Activated CD4-positive, alpha-beta T cell treated with anti-CD3 and anti-CD28 coated beads for 36 hours (primary cell): ENCODE measurements at regions of chr6 and their contacts with region 1.

Region 1: DNA sequence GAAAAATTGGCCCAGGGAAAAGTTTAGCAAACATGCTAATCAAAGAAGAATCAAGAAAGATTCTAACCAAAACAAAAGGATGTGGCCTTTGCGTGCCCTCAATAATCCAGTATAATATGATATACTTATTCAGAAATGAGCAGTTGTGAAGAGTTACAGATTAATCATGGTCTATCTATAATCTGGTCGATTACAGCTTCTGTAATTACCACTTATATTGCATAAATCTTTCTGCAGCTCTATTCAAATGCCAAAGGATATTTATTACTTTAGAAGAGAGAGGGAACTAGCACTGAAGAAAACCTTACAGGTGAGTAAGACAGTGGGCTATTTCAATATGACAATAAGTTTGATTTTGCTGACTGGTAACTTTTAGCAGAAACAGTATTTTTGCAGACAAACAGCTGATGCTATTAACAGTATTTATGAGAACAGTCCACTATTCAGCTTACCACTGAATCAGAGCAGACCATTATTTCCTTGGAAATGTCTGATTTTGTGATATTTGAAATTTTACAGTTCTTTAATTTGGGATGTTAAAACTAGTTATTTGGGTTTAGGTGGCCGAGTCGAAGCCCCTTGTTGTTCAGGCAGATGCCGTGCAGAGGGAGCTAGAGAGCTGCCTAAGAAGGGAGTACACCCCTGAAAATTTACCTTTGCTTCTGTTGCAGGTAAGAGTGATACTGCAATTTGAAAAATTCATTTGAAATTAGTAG is 92.2 kb downstream of the CEP57L1 start:
- DNase-seq: peak; percentile 75
- ATAC-seq: peak; percentile 81
- H3K4me3 Mint-ChIP-seq: no peak overlapping the region
- H3K27ac Mint-ChIP-seq: no peak overlapping the region
- H3K4me1 Mint-ChIP-seq: peaks cover 3% of the 10 kb centered on the region
- H3K27me3 Mint-ChIP-seq: peaks cover 18% of the 10 kb centered on the region

Region 2: GRCh38 chr6:109235481-109236038 is 48.0 kb after region 1 on chr6:
- CTCF ChIA-PET with region 1: interaction called, 8 read pairs
- POLR2A ChIA-PET with region 1: no interaction called
- intact Hi-C with region 1: loop called in 1 of 2 experiments (anchors 1 kb)
- DNase-seq: no peak
- ATAC-seq: no peak
- H3K4me3 Mint-ChIP-seq: no peak overlapping the region
- H3K27ac Mint-ChIP-seq: no peak overlapping the region
- H3K4me1 Mint-ChIP-seq: peaks cover 14% of the 10 kb centered on the region
- H3K27me3 Mint-ChIP-seq: peaks cover 2% of the 10 kb centered on the region

Region 3: DNA sequence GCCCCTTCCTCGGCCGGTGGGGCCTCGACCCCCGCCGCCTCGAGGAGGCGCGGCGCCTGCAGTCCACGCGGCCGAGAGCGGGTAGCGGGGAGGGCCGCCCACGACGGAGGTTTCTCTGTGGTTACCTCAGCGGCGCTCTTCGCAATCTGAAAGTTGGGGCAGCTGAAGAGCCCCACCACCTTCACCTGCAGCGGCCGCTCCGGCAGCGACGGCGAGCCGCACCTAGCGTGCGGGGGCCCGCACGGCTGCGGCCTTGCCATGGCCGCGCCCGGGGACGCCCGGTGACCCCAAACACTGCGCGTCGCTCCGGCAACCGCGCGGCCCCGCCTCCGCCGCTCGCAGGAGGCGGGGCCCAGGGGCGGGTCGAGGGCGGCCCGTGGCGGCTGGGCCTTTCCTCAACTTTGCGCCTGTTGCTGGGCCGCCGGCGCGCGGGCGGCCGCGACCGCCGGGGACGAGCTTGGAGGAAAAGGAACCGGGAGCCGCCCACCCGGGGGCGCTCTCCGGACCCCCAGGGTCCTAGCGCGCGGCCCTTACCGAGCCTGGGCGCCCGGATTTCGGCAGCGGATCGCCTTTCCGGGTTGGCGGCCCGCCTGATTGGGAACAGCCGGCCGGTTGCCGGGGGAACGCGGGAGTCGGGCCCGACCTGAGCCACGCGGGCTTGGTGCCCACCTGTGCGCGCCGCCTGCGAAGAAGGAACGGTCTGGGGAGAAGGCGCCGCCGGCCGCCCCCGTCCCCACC is 252.9 kb after region 1 on chr6 and contains the starts of genes PPIL6 and SMPD2:
- CTCF ChIA-PET with region 1: interaction called, 9 read pairs
- POLR2A ChIA-PET with region 1: no interaction called
- intact Hi-C with region 1: loop called (anchors 5 kb)
- DNase-seq: peak; percentile 86
- ATAC-seq: peak; percentile 85
- H3K4me3 Mint-ChIP-seq: peak within 1 kb of the TSS; percentile 89
- H3K27ac Mint-ChIP-seq: peak within 1 kb of the TSS; percentile 85
- H3K4me1 Mint-ChIP-seq: peaks cover 18% of the 10 kb centered on the region
- H3K27me3 Mint-ChIP-seq: no peaks in the 10 kb centered on the region
- total RNA-seq, gene PPIL6: 0.09 TPM in 1 of 2 experiments, not detected in the other
- total RNA-seq, gene SMPD2: 7.5 to 9.5 TPM

Region 4: DNA sequence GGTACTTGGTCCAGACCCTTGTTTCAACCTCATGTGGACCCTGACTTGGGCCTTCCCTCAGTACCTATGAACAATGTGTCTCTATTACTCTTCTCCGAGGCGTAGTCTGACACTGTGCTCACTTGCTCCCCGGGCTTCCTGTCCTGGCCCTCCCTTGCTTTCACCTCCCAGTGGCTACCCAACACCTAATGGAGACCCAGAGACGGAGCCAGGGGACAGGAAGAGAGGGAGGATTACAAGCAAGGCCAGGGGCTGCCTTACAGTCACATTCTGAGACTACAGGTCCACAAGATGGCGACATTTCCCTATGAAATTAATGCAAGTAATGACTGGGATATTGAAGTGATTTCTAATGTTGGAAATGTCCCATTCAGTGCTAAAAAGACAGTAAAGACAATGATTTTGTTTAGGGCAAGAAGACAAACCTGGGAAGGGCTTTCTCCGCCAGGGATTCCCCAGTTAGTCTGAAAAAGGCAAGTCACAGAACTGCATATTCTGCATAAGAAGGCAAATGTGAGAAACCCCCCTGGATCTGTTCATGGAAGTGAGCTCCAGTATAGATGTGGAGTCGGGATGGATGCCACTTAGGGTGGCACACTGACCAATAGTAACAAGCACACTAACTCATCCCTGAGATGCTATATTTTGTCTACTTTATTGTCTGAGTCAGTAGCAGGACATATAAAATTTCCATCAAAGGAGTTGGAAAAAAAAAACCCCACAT is 339.5 kb after region 1 on chr6:
- CTCF ChIA-PET with region 1: no interaction called
- POLR2A ChIA-PET with region 1: no interaction called
- intact Hi-C with region 1: loop called in 1 of 2 experiments (anchors 5 kb)
- DNase-seq: peak; percentile 66
- ATAC-seq: peak; percentile 84
- H3K4me3 Mint-ChIP-seq: no peak overlapping the region
- H3K27ac Mint-ChIP-seq: no peak overlapping the region
- H3K4me1 Mint-ChIP-seq: no peaks in the 10 kb centered on the region
- H3K27me3 Mint-ChIP-seq: no peaks in the 10 kb centered on the region